Right ventricle myocardium inferior (tissue), 1 donor: ENCODE measurements at regions of chr2 and their contacts with region 1.

Region 1: GRCh38 chr2:215269397-215270119 is 42.3 kb upstream of the ATIC start:
- DNase-seq: no peak
- ATAC-seq: no peak

Region 2: GRCh38 chr2:214960677-214961076 is 308.9 kb before region 1 on chr2:
- intact Hi-C with region 1: loop called (anchors 2 kb)
- DNase-seq: no peak
- ATAC-seq: no peak

Region 3: DNA sequence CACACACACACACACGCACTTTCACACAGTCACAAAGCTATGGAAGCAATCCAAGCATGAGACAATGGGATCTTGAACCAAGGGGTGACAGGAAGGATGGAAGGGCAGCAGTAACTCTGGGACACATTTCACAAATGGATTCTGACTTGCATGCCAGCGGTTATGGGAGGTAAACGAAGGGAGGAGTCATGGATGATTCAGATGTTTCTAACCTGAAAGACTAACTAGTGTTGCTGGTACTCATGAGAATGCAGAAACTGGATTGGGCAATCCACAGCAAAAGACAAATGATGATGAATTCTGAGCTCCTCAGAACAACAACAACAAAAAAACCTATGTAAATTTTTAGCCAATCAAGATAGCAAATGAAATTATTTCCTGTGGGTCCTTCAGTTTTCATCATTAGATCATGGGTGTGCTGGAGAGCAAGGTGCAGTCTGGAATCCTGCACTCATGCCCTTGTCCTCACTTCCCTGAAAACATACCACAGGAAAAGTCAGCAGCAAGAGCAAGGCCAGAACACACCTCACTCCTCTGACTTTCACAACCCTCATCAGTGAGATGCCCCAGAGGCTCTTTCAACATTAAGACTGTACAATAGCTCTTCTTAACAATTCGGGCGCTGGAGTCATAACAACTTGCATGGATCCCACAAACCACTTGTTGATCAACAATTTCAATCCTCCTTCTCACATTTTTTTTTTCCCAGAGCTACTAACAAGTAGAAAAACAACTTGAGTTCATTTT is 163.8 kb before region 1 on chr2:
- intact Hi-C with region 1: no loop called
- DNase-seq: no peak
- ATAC-seq: no peak

Region 4: GRCh38 chr2:215218599-215219577 is 50.7 kb before region 1 on chr2:
- intact Hi-C with region 1: no loop called
- DNase-seq: no peak
- ATAC-seq: no peak